Natural killer cell (primary cell): ENCODE measurements at regions of chr3 and their contacts with region 1.

Region 1: GRCh38 chr3:46284981-46285683 is 42.9 kb downstream of the CCR3 start:
- DNase-seq: peak in 1 of 2 donors; percentile 87
- ATAC-seq: peak; percentile 46 to 75 (median 73)
- H3K4me3 ChIP-seq: no peak overlapping the region
- H3K4me3 Mint-ChIP-seq: peak overlapping the region; percentile 68
- H3K27ac ChIP-seq: peak overlapping the region; percentile 77
- H3K27ac Mint-ChIP-seq: peak overlapping the region; percentile 74 to 87
- H3K4me1 ChIP-seq: peaks cover 68% of the 10 kb centered on the region
- H3K4me1 Mint-ChIP-seq: peaks cover 54 to 73% of the 10 kb centered on the region in 2 donors
- H3K27me3 ChIP-seq: no peaks in the 10 kb centered on the region
- H3K27me3 Mint-ChIP-seq: no peaks in the 10 kb centered on the region
- CTCF ChIP-seq: no peak

Region 2: DNA sequence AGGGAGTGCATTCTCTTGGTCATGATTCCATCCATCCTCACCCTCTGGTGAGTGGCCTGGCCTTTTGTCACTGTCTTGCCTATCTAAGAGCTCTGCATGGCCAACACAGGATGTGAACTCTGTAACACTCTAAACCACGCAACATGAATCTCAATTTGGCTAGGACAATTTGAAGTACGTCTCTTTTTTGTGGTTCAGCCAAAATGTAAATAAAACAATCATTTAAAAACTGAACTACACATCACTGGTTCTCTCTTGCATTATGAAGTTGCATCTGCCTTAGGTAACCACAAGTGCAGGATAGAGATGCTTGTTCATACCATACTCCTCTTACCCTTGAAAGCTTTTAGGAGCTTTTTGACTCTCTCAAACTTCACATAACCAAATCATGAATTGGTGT is 15.6 kb before region 1 on chr3:
- intact Hi-C with region 1: loop called (anchors 2 kb)
- DNase-seq: peak in 1 of 2 donors; percentile 46
- ATAC-seq: peak; percentile 84 to 99 (median 87)
- H3K4me3 ChIP-seq: no peak overlapping the region
- H3K4me3 Mint-ChIP-seq: peak overlapping the region; percentile 55
- H3K27ac ChIP-seq: peak overlapping the region; percentile 10
- H3K27ac Mint-ChIP-seq: peak overlapping the region; percentile 59 to 73
- H3K4me1 ChIP-seq: peaks cover 24% of the 10 kb centered on the region
- H3K4me1 Mint-ChIP-seq: peaks cover 37 to 54% of the 10 kb centered on the region in 2 donors
- H3K27me3 ChIP-seq: no peaks in the 10 kb centered on the region
- H3K27me3 Mint-ChIP-seq: no peaks in the 10 kb centered on the region
- CTCF ChIP-seq: no peak

Region 3: DNA sequence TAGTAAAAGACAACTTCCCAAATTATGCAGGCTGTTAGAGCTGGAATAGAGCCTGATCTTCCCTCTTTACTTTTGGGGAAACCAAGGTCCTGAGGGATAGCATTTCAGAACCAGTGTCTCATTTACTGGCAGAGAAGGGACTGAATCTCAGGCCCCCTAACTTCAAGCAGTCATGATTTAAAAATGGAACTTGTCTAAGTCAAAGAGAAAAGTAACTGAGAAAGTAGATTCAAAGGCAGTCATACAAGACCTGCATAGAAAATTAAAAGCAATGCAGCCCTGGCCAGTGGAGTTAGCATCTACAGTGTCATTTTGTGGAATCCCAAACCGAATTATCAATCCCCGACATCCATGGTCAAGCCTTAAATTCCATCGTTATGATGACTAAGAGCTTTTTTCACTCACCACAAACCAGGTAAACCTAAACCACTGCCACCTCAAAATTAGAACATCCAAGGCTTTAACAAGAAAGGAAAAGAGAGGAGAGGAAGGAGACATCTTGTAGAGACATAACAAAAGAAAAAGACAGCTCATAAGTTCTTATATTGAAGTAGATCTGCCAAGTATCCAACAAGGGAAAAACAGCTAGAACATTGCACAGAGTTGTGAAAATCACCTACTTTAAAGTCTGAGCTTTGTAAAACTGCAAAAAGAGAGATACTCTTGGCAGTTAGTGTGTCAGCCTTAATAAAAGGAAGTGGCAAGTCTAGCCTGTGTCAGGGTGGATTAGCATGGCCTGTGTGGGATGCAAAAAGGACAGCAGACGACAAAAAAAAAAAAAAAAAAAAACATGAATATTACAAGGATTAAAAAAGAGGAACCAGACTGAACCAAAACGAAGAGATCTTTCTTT is 14.7 kb after region 1 on chr3:
- intact Hi-C with region 1: loop called (anchors 2 kb)
- DNase-seq: peak in 1 of 2 donors; percentile 54
- ATAC-seq: peak; percentile 83 to 90 (median 85)
- H3K4me3 ChIP-seq: no peak overlapping the region
- H3K4me3 Mint-ChIP-seq: peak overlapping the region; percentile 43
- H3K27ac ChIP-seq: peak overlapping the region; percentile 13
- H3K27ac Mint-ChIP-seq: peak overlapping the region; percentile 62 to 79
- H3K4me1 ChIP-seq: peaks cover 48% of the 10 kb centered on the region
- H3K4me1 Mint-ChIP-seq: peaks cover 46 to 47% of the 10 kb centered on the region in 2 donors
- H3K27me3 ChIP-seq: no peaks in the 10 kb centered on the region
- H3K27me3 Mint-ChIP-seq: no peaks in the 10 kb centered on the region
- CTCF ChIP-seq: no peak